Activated B cell treated with CpG ODN at 0.5 μM for 24 hours (primary cell): ENCODE measurements at regions of chr4 and their contacts with region 1.

Region 1: DNA sequence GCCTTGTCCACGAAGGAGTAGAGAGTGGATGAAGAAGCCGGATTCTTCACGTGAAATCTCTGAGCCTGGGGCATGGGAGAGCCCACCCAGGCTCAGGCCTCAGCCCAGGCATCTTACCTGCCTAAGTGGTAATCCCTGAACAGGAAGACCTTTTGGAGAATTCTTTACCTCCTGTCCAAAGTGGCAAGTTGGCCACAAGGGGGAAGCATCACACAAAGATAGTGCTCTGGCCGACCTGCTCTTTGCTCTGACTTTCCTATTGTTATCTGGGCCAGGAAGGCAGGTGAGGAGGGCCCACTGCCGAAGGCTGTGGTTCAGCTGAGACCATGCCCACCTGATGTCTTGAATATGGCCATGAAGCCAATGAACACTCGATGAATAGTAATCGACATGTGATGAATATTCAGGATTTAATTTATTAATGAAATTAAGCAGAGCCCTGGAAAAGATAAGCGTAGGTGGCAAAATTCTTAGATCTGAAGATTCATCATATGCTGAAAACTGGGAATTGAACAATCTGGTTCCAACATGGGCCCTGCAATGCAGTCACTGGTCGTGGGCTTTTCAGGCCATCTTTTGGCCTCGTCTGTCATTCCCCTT is 93.8 kb downstream of the PDGFRA start:
- DNase-seq: no peak
- ATAC-seq: peak; percentile 40
- H3K4me3 Mint-ChIP-seq: no peak overlapping the region
- H3K27ac Mint-ChIP-seq: no peak overlapping the region
- H3K4me1 Mint-ChIP-seq: peaks cover 5% of the 10 kb centered on the region
- H3K27me3 Mint-ChIP-seq: no peaks in the 10 kb centered on the region
- CTCF ChIP-seq: no peak

Region 2: DNA sequence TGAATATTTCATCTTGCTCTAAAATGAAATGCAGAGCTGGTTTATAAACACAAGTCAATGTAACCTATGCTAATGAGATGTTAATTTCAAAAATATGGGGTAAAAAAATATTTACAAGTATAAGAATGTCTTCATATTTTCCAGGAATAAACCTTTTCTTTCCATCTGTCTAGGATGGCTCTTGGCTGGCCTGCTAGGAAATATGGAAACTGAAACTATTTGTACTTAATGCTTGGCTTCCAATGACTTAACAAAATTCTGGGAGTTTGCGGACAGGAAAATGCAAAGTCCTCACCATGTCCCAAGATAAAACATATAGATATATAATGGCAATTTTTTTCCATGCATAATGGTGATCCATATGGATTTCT is 1125.2 kb before region 1 on chr4:
- CTCF ChIA-PET with region 1: no interaction called
- POLR2A ChIA-PET with region 1: no interaction called
- intact Hi-C with region 1: no loop called
- DNase-seq: no peak
- ATAC-seq: no peak
- H3K4me3 Mint-ChIP-seq: no peak overlapping the region
- H3K27ac Mint-ChIP-seq: no peak overlapping the region
- H3K4me1 Mint-ChIP-seq: no peaks in the 10 kb centered on the region
- H3K27me3 Mint-ChIP-seq: no peaks in the 10 kb centered on the region
- CTCF ChIP-seq: no peak

Region 3: GRCh38 chr4:54268151-54268550 is 54.8 kb before region 1 on chr4:
- CTCF ChIA-PET with region 1: no interaction called
- POLR2A ChIA-PET with region 1: no interaction called
- intact Hi-C with region 1: no loop called
- DNase-seq: no peak
- ATAC-seq: no peak
- H3K4me3 Mint-ChIP-seq: no peak overlapping the region
- H3K27ac Mint-ChIP-seq: no peak overlapping the region
- H3K4me1 Mint-ChIP-seq: no peaks in the 10 kb centered on the region
- H3K27me3 Mint-ChIP-seq: peaks cover 7% of the 10 kb centered on the region
- CTCF ChIP-seq: no peak

Region 4: GRCh38 chr4:54683616-54684346 is 360.9 kb after region 1 on chr4:
- CTCF ChIA-PET with region 1: no interaction called
- POLR2A ChIA-PET with region 1: no interaction called
- intact Hi-C with region 1: loop called (anchors 2 kb)
- DNase-seq: no peak
- ATAC-seq: no peak
- H3K4me3 Mint-ChIP-seq: peak overlapping the region; percentile 69
- H3K27ac Mint-ChIP-seq: no peak overlapping the region
- H3K4me1 Mint-ChIP-seq: peaks cover 44% of the 10 kb centered on the region
- H3K27me3 Mint-ChIP-seq: no peaks in the 10 kb centered on the region
- CTCF ChIP-seq: no peak

Region 5: DNA sequence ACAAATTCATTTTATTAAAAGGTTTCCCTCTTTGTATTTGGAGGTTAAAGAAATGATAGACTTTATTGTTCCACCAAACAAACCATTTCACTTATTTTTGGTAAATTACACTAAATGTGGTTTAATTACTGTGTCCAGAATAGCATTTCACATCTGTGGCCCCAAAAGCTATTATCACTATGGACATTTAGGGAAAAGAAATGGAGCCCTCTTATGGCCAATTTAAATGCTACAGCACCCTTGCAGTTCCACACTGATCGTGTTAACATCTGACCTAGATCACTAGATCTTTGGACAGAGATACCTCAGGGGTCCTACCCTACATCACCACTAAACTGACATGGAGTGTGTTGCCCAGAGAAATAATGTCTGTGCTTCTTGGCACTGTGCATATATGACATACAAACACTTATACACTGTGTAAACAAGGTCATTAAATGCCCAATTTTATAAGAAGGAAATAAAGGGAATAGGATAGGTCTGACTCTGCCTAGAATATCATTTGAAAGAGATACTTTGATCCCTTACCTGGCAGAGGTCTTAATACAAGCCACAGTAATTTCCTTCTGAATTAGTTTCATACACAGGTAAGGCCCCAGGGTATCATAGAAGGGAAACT is 638.5 kb after region 1 on chr4:
- CTCF ChIA-PET with region 1: no interaction called
- POLR2A ChIA-PET with region 1: no interaction called
- intact Hi-C with region 1: loop called (anchors 1 kb)
- DNase-seq: no peak
- ATAC-seq: no peak
- H3K4me3 Mint-ChIP-seq: no peak overlapping the region
- H3K27ac Mint-ChIP-seq: no peak overlapping the region
- H3K4me1 Mint-ChIP-seq: no peaks in the 10 kb centered on the region
- H3K27me3 Mint-ChIP-seq: peaks cover 6% of the 10 kb centered on the region
- CTCF ChIP-seq: no peak

Region 6: DNA sequence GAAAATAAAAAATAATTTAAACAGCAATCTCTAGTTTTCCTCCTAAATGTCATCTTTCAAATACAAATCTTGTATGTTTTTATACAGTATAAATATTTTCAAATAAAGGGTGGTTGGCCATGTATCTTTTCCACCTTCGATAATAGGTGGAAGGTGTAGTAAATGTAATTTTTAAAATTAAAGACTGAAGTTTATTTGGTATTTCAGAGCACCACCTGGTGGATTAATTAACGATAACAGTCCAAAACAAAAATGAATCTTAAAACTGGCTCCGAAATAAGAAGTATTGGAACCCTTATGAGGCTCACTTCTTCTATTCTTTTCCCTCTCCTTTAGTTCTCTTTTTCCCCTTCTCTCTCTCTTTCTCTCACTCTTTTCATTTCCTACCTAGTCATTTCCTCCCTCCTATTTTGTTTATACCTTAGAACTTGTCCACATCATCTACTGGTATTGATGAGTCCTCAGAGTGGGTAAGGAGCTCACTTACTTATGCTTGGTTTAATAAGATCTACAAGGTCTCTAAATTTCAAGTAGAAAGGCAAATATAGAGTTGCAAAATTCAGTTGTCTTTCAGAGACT is 1413.8 kb after region 1 on chr4:
- CTCF ChIA-PET with region 1: no interaction called
- POLR2A ChIA-PET with region 1: no interaction called
- intact Hi-C with region 1: loop called (anchors 2 kb)
- DNase-seq: no peak
- ATAC-seq: no peak
- H3K4me3 Mint-ChIP-seq: no peak overlapping the region
- H3K27ac Mint-ChIP-seq: no peak overlapping the region
- H3K4me1 Mint-ChIP-seq: no peaks in the 10 kb centered on the region
- H3K27me3 Mint-ChIP-seq: peaks cover 32% of the 10 kb centered on the region
- CTCF ChIP-seq: no peak